ENCODE measurements at regions of chr4 and their contacts with region 1.

Region 1: GRCh38 chr4:129093191-129093920 is at the start of gene SCLT1:
- DNase-seq: peak; percentile 88 to 99 (median 96)
- ATAC-seq: peak; percentile 92
- H3K4me3 ChIP-seq: peak within 1 kb of the TSS; percentile 87 to 94
- H3K4me3 Mint-ChIP-seq: peak within 1 kb of the TSS; percentile 24
- H3K27ac ChIP-seq: peak within 1 kb of the TSS; percentile 94 to 98
- H3K27ac Mint-ChIP-seq: no peak within 1 kb of the TSS
- H3K4me1 ChIP-seq: peaks cover 40% of the 10 kb centered on the region
- H3K4me1 Mint-ChIP-seq: peaks cover 49% of the 10 kb centered on the region
- H3K27me3 ChIP-seq: no peaks in the 10 kb centered on the region
- H3K27me3 Mint-ChIP-seq: no peaks in the 10 kb centered on the region
- CTCF ChIP-seq: no peak
- total RNA-seq, gene SCLT1: 19.8 to 21.7 TPM

Region 2: DNA sequence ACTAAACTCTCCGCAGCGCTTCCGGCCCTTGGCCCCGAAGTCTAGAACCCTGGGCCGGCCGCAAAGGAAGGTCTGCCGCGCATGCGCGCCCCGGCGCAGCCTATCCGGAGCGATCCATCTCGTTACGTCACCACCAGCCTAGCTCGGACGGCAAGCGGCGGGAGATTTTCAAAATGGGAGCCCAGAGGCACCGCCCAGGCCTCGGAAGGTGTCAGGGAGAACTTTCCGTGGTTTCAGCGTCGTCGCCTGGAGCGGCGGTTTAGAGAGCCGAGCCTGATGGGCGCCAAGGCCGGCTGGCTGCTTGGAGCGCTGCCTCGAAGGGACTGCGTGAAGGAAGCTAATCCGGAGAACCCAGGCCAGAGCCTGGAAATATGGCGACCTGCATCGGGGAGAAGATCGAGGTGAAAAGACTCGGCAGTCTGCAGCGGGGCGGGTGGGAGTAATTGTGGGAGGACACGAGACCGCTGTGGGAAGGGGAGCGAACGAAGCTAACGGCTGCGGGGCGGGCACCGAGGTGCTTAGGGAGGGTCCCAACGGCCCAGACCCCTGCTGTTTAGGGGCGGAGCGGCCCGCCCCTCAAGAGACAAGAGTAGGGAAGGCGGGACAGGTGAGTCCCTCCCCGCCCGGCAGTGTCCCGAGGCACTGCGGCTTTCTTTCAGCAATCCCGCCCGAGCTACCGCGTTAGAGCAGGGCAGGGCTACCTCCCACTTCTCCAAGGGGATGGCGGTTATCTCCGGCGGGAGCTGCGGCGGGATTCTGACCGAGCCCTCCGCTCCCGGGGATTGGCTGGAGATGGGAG is 1212.4 kb before region 1 on chr4 and contains the start of gene PLK4:
- CTCF ChIA-PET with region 1: no interaction called
- POLR2A ChIA-PET with region 1: no interaction called
- intact Hi-C with region 1: loop called (anchors 1 to 2 kb)
- DNase-seq: peak; percentile 87 to 97 (median 94)
- ATAC-seq: peak; percentile 92
- H3K4me3 ChIP-seq: peak within 1 kb of the TSS; percentile 75 to 84
- H3K4me3 Mint-ChIP-seq: peak within 1 kb of the TSS; percentile 98
- H3K27ac ChIP-seq: peak within 1 kb of the TSS; percentile 71 to 87
- H3K27ac Mint-ChIP-seq: peak within 1 kb of the TSS; percentile 97
- H3K4me1 ChIP-seq: peaks cover 19% of the 10 kb centered on the region
- H3K4me1 Mint-ChIP-seq: peaks cover 23% of the 10 kb centered on the region
- H3K27me3 ChIP-seq: no peaks in the 10 kb centered on the region
- H3K27me3 Mint-ChIP-seq: no peaks in the 10 kb centered on the region
- CTCF ChIP-seq: no peak
- total RNA-seq, gene PLK4: 4.5 to 5.9 TPM

Region 3: DNA sequence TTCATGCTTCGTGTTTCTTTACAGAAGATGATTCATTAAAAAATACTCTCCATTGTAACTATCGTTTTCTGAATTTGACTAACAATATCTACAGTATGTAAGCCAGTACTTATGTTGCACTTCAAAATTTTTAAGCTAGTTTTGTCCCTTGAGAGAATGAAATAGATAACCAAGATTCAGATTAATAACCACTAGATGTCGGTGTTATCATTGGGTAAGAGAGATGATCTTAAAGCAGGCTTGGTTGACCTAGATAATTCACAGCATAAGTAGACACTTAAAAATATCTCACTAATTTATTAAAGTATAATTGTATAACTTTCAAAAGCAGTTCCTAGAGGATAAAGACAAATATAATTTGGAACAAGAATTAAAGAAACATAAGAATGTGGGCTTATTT is 433.5 kb after region 1 on chr4:
- CTCF ChIA-PET with region 1: no interaction called
- POLR2A ChIA-PET with region 1: no interaction called
- intact Hi-C with region 1: no loop called
- DNase-seq: peak in 1 of 9 experiments; percentile 1
- ATAC-seq: no peak
- H3K4me3 ChIP-seq: no peak overlapping the region
- H3K4me3 Mint-ChIP-seq: no peak overlapping the region
- H3K27ac ChIP-seq: no peak overlapping the region
- H3K27ac Mint-ChIP-seq: no peak overlapping the region
- H3K4me1 ChIP-seq: no peaks in the 10 kb centered on the region
- H3K4me1 Mint-ChIP-seq: no peaks in the 10 kb centered on the region
- H3K27me3 ChIP-seq: no peaks in the 10 kb centered on the region
- H3K27me3 Mint-ChIP-seq: no peaks in the 10 kb centered on the region
- CTCF ChIP-seq: no peak